ENCODE measurements at regions of chr3 and their contacts with region 1.

Region 1: GRCh38 chr3:174330303-174330702 is 528.8 kb upstream of the NAALADL2 start:
- DNase-seq: no peak
- H3K4me3 ChIP-seq: no peak overlapping the region
- H3K4me3 Mint-ChIP-seq: no peak overlapping the region
- H3K27ac ChIP-seq: peak overlapping the region in 1 of 2 donors; percentile 91
- H3K27ac Mint-ChIP-seq: peak overlapping the region; percentile 95 to 99 (median 97)
- H3K4me1 ChIP-seq: peaks cover 24 to 26% of the 10 kb centered on the region in 2 donors
- H3K4me1 Mint-ChIP-seq: peaks cover 31% of the 10 kb centered on the region
- H3K27me3 ChIP-seq: no peaks in the 10 kb centered on the region
- H3K27me3 Mint-ChIP-seq: peaks cover 0 to 3% (median 0%) of the 10 kb centered on the region in 3 donors
- CTCF ChIP-seq: no peak

Region 2: DNA sequence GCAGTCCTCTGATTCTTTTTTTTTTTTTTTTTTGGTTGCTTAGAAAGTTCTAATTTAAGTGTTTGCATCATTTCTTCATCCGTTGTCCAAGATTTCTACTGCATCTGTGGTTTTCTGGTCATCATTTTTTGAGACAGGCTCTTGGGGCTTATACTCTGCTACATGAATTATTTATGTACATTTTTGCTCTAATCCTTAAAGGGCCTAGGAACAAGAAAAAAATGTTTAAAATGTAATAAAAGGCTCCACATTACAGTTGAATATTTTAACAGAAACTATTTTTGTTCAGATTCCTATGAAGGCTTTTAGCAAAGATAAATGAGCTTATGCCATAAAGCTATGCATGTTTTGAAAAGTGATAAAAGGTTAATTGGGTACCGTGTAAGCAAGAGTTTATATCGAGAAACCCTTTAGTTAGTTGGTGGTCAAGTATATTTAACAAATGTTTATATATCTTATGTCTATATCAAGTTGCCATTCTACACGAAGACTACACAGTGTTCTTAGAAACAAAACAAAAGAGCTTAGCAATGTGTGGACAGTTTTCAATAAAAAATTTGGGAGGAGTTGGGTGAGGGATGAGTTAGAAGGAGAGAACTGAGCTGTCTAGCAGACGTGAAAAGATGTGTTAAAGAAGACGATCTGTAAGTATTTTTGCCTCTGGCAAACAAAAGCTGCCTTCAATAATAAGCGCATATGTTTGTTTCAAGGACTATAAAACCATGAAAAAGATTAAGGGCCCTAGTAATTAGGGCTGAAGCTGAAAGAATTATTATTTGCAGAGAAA is 34.8 kb before region 1 on chr3:
- intact Hi-C with region 1: no loop called
- DNase-seq: no peak
- H3K4me3 ChIP-seq: no peak overlapping the region
- H3K4me3 Mint-ChIP-seq: no peak overlapping the region
- H3K27ac ChIP-seq: no peak overlapping the region
- H3K27ac Mint-ChIP-seq: no peak overlapping the region
- H3K4me1 ChIP-seq: no peaks in the 10 kb centered on the region
- H3K4me1 Mint-ChIP-seq: no peaks in the 10 kb centered on the region
- H3K27me3 ChIP-seq: no peaks in the 10 kb centered on the region
- H3K27me3 Mint-ChIP-seq: peaks cover 0 to 2% (median 0%) of the 10 kb centered on the region in 3 donors
- CTCF ChIP-seq: no peak

Region 3: DNA sequence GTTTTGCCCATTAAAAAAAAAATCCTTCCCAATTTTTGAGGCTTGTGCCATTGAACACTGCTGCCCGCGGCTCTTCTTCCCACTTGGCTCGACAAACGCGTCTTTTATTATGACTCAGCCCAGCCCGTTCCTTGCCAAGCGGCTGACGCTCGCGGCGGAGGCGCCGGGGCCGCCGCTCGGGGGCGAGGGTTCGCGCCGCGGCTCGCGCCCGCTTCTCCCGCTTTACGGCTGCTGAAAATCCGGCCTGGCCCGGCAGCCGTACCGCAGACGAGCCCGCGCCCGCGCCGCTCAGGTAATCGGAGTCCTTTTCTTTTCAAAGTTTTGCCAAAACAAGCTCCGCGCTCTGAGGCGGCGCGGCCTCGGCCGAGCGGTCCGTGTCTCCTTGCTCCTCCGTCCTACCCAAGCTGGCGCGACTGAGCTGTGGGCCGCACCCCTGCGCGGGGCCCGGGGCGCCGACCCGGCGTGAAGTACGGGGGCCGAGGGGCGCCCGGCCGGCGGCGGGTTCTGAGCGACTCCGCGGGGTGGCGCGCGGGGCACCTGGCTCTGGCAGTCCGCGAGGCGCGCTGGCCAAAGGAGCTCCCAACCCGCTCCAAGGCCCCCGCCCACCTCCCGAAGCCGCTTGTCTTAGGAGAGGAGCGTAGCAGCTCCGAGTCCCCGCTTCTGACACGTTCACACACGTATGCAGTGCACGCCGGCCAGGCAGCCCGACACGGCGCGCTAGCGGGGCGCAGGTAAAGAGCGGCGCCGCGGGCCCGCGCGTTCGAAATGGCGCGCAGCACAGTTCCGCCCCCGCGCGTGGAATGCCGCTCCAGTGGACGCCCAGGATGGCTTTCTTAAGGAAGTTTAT is 110.7 kb after region 1 on chr3:
- intact Hi-C with region 1: loop called in 1 of 2 experiments (anchors 10 kb)
- DNase-seq: peak; percentile 37 to 64 (median 55)
- H3K4me3 ChIP-seq: peak overlapping the region; percentile 52 to 79 (median 78)
- H3K4me3 Mint-ChIP-seq: peak overlapping the region; percentile 83 to 92
- H3K27ac ChIP-seq: no peak overlapping the region
- H3K27ac Mint-ChIP-seq: peak overlapping the region in 4 of 7 donors; percentile 30 to 82 (median 62)
- H3K4me1 ChIP-seq: peaks cover 35 to 40% of the 10 kb centered on the region in 2 donors
- H3K4me1 Mint-ChIP-seq: peaks cover 33% of the 10 kb centered on the region
- H3K27me3 ChIP-seq: peaks cover 15% of the 10 kb centered on the region in 2 donors
- H3K27me3 Mint-ChIP-seq: peaks cover 11 to 18% (median 14%) of the 10 kb centered on the region in 3 donors
- CTCF ChIP-seq: no peak

Measured in CD14-positive monocyte (primary cell).